ENCODE measurements at regions of chr1 and their contacts with region 1.

Region 1: GRCh38 chr1:152640351-152640750 is 17.4 kb upstream of the LCE3A start:
- DNase-seq: no peak
- ATAC-seq: no peak
- H3K4me3 ChIP-seq: no peak overlapping the region
- H3K27ac ChIP-seq: no peak overlapping the region
- H3K4me1 ChIP-seq: no peaks in the 10 kb centered on the region
- H3K27me3 ChIP-seq: no peaks in the 10 kb centered on the region
- CTCF ChIP-seq: no peak
- EP300 ChIP-seq: no peak
- POLR2A ChIP-seq: no peak
- RAD21 ChIP-seq: no peak

Region 2: DNA sequence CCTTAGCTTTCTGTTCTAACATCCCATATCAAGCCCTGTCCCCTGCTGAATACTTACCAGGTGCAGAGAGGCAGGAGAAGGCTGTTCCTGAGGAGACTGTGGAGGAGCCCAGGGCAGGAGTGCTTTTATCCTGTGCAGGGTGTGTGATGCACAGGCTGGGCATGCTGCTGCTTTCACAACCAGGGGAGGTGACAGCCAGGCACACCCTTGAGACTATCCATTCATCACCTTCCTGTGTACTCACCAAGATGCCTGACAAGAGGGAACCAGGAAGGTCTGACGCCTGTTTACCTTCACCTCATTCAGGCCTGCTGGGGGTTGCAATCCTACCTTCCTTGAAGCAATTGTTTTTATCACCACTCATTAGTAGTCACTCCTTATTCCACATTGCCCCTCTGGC is 73.7 kb before region 1 on chr1 and contains the start of gene LCE3E:
- CTCF ChIA-PET with region 1: no interaction called
- POLR2A ChIA-PET with region 1: no interaction called
- RAD21 ChIA-PET with region 1: no interaction called
- SMC1A ChIA-PET with region 1: no interaction called
- in situ Hi-C with region 1: no loop called
- intact Hi-C with region 1: no loop called
- DNase-seq: no peak
- ATAC-seq: no peak
- H3K4me3 ChIP-seq: no peak within 1 kb of the TSS
- H3K27ac ChIP-seq: no peak within 1 kb of the TSS
- H3K4me1 ChIP-seq: no peaks in the 10 kb centered on the region
- H3K27me3 ChIP-seq: no peaks in the 10 kb centered on the region
- CTCF ChIP-seq: no peak
- EP300 ChIP-seq: no peak
- POLR2A ChIP-seq: no peak
- RAD21 ChIP-seq: no peak
- polyA plus RNA-seq, gene LCE3E: not detected

Region 3: GRCh38 chr1:152577168-152577567 is 63.2 kb before region 1 on chr1:
- CTCF ChIA-PET with region 1: no interaction called
- POLR2A ChIA-PET with region 1: no interaction called
- RAD21 ChIA-PET with region 1: no interaction called
- SMC1A ChIA-PET with region 1: no interaction called
- in situ Hi-C with region 1: no loop called
- intact Hi-C with region 1: no loop called
- DNase-seq: peak; percentile 19
- ATAC-seq: peak; percentile 71
- H3K4me3 ChIP-seq: no peak overlapping the region
- H3K27ac ChIP-seq: no peak overlapping the region
- H3K4me1 ChIP-seq: peaks cover 5% of the 10 kb centered on the region; the same call in 1 of the 2 replicates
- H3K27me3 ChIP-seq: peaks cover 0 to 1% of the 10 kb centered on the region in 2 experiments; a peak in 1 of 4 replicates
- CTCF ChIP-seq: no peak
- EP300 ChIP-seq: no peak
- POLR2A ChIP-seq: no peak
- RAD21 ChIP-seq: no peak

Region 4: DNA sequence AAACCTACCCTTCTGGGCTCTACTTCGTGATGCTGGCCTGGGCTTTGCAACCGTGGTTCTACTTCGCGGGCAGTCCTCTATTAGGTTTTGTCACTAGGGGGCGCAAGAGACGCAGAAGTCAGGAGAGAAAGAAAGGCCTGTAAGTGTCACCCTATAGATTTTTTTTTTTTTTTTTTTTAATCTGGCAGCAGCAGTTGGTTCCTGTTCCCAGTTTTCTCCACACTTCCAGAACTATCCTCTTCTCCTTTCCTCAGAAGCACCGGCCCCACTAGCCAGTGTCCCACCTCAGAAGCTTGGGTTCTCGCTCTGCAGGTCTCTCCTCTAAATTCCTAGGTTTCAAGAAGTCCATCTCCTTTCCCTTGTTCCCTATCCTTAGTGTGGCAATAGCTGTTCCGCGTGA is 13.8 kb after region 1 on chr1:
- CTCF ChIA-PET with region 1: interaction called, 24 read pairs
- POLR2A ChIA-PET with region 1: no interaction called
- RAD21 ChIA-PET with region 1: interaction called, 3 read pairs
- SMC1A ChIA-PET with region 1: interaction called, 11 read pairs
- in situ Hi-C with region 1: no loop called
- intact Hi-C with region 1: no loop called
- DNase-seq: no peak
- ATAC-seq: peak; percentile 93
- H3K4me3 ChIP-seq: no peak overlapping the region
- H3K27ac ChIP-seq: no peak overlapping the region
- H3K4me1 ChIP-seq: no peaks in the 10 kb centered on the region
- H3K27me3 ChIP-seq: peaks cover 0 to 9% of the 10 kb centered on the region in 2 experiments; a peak in 2 of 4 replicates
- CTCF ChIP-seq: peak; percentile 68 to 84 (median 80)
- EP300 ChIP-seq: no peak
- POLR2A ChIP-seq: no peak
- RAD21 ChIP-seq: peak; percentile 77